AG04449 (cell line): ENCODE measurements at regions of chr10 and their contacts with region 1.

Region 1: DNA sequence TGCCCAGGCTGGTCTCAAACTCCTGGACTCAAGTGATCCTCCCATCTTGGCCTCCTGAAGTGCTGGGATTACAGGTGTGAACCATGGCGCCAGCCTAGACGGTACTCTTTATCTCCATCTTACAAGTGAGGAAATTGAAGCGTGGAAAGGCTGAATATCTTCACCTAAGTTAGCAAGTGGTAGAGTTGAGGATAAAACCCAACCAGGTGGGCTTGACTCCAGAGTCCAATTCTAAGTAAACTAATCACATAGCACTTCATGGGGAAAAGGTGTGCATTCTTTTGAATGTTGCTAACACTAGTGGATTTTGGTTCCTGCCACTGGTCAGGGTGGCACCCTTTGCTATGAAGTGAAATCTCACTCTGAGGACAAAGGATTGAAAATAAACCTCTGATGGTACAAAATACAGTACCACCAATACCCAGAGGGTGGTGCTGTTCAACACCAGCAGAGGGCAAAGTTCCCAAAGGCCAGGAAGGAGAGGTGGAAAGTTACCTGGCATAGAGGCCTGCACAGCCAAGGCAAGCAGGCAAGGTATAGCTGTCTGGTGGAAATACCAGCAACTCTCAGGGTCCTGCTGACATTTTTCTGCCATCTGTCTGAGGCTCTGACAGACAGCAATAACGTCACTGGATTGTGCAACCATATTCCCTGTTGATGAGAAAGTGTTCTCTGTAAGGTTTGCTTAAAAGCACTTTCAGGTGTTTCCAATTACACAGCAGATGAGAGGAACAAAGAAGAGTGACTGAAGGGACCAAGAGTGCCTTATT is 17.6 kb downstream of the ZDHHC16 start:
- DNase-seq: no peak
- H3K4me3 ChIP-seq: no peak overlapping the region
- CTCF ChIP-seq: peak; percentile 71

Region 2: GRCh38 chr10:97234400-97234799 is 229.1 kb before region 1 on chr10:
- CTCF ChIA-PET with region 1: no interaction called
- POLR2A ChIA-PET with region 1: no interaction called
- DNase-seq: no peak
- H3K4me3 ChIP-seq: no peak overlapping the region
- CTCF ChIP-seq: peak; percentile 45

Region 3: GRCh38 chr10:97407211-97407951 is 56.2 kb before region 1 on chr10:
- CTCF ChIA-PET with region 1: interaction called, 16 read pairs
- POLR2A ChIA-PET with region 1: no interaction called
- DNase-seq: no peak
- H3K4me3 ChIP-seq: no peak overlapping the region
- CTCF ChIP-seq: peak; percentile 79

Region 4: GRCh38 chr10:97475936-97476594 is 12.5 kb after region 1 on chr10:
- CTCF ChIA-PET with region 1: interaction called, 52 read pairs
- POLR2A ChIA-PET with region 1: no interaction called
- DNase-seq: peak; percentile 58
- H3K4me3 ChIP-seq: no peak overlapping the region
- CTCF ChIP-seq: no peak

Region 5: DNA sequence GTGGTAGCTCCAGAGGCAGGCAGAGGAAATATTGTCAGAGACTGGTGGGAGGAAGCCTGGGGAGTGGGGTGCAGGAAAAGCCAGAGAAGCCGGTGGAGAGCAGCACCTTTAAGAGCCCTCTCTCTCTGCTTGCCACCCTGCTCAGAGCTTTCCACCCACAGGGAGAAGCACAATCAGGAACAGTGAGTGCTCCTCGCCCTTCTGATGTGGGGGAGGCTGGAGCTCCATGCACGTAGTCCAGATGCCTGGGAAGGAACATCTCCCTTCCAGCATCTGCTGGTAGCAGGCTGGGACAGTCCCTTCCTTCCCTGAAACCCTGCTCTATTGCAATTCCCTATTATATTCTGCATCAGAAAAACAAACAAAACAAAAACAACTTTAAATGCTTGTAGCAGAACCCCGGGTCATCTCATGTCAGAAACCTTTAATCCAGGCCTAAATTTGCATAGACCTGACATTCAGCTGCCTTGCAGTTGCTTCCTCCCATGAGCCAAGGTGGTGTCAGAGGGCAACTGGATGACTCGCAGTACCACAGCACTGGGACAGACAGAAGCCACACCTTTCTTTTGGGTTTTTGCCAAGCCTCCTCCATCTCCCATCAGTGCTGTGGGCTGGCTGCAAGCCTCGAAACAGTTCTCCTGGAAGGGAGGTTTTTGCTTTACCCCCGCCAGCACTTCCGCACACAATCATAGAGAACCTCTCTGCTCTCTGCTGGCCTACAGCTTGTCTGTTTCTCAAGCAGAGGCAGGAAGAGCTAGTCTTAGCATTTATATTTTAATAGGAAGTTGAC is 210.4 kb after region 1 on chr10:
- CTCF ChIA-PET with region 1: no interaction called
- POLR2A ChIA-PET with region 1: no interaction called
- DNase-seq: no peak
- H3K4me3 ChIP-seq: no peak overlapping the region
- CTCF ChIP-seq: no peak